ENCODE measurements at regions of chr1 and their contacts with region 1.

Region 1: GRCh38 chr1:27416387-27417111 is 24.1 kb downstream of the GPR3 start:
- DNase-seq: peak; percentile 70
- ATAC-seq: peak; percentile 73
- H3K4me3 ChIP-seq: no peak overlapping the region
- H3K27ac ChIP-seq: peak overlapping the region; percentile 74
- H3K4me1 ChIP-seq: peaks cover 36% of the 10 kb centered on the region
- H3K27me3 ChIP-seq: no peaks in the 10 kb centered on the region
- CTCF ChIP-seq: peak; percentile 74 to 82 (median 74)
- EP300 ChIP-seq: 0 out of 4 replicates have a peak, but pooled peaks of 1 of the 2 experiments have one; percentile 26
- POLR2A ChIP-seq: no peak
- RAD21 ChIP-seq: peak; percentile 87

Region 2: DNA sequence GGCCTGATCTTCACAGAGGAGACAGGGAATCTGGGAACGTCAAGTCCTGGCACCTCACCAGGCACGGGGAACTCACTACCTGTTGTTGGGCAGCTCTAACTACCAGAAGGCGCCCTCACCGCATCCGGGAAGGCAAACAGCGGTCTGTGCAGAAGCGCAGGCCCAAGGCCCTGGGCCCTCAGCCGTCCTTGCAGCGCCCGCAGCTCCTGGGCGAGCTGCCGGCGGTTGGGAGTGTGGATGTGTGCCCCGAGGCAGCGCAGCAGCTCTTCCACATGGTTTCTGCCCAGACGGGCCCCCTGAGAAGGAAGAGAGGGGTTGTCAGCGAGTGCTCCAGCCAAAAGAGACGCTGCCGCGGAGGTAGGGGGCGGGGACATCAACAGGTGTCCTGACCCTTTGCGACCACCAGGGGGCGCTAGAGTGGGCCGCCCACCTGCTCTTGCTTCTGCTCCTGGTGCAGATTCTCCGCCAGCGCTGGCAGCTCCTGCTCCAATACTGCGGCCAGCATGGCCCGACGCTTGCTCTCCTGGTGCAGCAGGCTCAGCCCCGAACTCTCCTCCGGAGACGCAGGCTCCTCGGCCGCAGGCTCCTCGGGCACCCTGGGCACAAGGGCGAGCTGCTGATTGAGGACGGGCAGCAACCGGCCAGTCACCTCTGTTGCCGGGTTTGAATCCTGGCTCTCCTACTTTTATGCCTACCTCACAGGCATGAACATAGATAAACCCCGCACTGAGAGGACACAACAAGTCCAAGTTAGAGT is 59.1 kb before region 1 on chr1:
- CTCF ChIA-PET with region 1: no interaction called
- POLR2A ChIA-PET with region 1: no interaction called
- RAD21 ChIA-PET with region 1: no interaction called
- SMC1A ChIA-PET with region 1: no interaction called
- in situ Hi-C with region 1: no loop called
- intact Hi-C with region 1: no loop called
- DNase-seq: no peak
- ATAC-seq: peak; percentile 88
- H3K4me3 ChIP-seq: peak overlapping the region; percentile 54; the same call in 1 of the 2 replicates
- H3K27ac ChIP-seq: no peak overlapping the region
- H3K4me1 ChIP-seq: peaks cover 13% of the 10 kb centered on the region
- H3K27me3 ChIP-seq: no peaks in the 10 kb centered on the region; a peak in 1 of 4 replicates
- CTCF ChIP-seq: peak; percentile 90 to 96 (median 93); a peak in 5 of 6 replicates
- EP300 ChIP-seq: no peak
- POLR2A ChIP-seq: no peak
- RAD21 ChIP-seq: peak; percentile 49

Region 3: DNA sequence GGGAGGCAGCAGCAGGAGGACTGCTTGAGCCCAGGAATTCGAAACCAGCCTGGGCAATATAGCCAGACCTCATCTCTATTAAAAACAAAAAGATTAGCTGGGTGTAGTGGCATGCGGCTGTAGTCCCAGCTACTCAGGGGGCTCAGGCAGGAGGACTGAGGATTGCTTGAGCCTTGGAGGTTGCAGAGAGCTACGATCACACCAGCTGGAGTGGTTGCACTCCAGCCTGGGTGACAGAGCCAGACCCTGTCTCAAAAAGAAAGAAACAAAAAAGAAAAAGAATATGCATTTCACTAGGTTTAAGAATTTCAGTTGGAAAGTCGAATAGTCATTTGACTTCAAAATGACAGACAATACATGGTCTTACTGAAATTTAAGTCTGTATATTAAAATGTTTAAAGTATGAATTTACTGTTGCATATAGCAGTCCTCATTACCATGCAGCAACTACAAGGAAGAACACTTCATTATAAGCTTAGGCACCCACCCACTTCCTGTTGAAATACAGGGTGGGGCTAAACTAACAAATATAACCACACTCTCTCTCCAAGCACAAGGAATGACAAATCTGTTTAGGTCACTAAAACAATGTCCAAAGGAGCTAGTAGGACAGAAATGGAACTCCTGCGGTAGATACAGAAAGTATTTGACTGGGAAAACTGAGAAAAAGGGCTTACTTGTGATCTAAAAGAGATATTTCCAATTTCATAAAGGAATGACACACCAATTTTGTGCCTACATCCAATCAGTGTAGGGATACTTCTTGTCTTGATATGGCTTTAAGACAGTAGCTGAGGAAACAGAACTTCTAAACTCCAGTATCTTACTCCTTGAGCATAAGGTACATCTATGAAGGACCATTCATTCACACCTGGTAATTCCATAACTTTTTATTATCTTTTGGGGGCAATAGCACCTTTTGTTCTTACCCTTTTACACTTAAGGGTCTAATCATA is 19.9 kb after region 1 on chr1:
- CTCF ChIA-PET with region 1: interaction called, 240 read pairs
- POLR2A ChIA-PET with region 1: interaction called, 78 read pairs
- RAD21 ChIA-PET with region 1: interaction called, 126 read pairs
- SMC1A ChIA-PET with region 1: interaction called, 470 read pairs
- in situ Hi-C with region 1: no loop called
- intact Hi-C with region 1: no loop called
- DNase-seq: no peak
- ATAC-seq: peak; percentile 75
- H3K4me3 ChIP-seq: peak overlapping the region; percentile 48
- H3K27ac ChIP-seq: peak overlapping the region; percentile 82
- H3K4me1 ChIP-seq: peaks cover 71% of the 10 kb centered on the region
- H3K27me3 ChIP-seq: no peaks in the 10 kb centered on the region
- CTCF ChIP-seq: no peak
- EP300 ChIP-seq: no peak
- POLR2A ChIP-seq: no peak
- RAD21 ChIP-seq: no peak

Region 4: DNA sequence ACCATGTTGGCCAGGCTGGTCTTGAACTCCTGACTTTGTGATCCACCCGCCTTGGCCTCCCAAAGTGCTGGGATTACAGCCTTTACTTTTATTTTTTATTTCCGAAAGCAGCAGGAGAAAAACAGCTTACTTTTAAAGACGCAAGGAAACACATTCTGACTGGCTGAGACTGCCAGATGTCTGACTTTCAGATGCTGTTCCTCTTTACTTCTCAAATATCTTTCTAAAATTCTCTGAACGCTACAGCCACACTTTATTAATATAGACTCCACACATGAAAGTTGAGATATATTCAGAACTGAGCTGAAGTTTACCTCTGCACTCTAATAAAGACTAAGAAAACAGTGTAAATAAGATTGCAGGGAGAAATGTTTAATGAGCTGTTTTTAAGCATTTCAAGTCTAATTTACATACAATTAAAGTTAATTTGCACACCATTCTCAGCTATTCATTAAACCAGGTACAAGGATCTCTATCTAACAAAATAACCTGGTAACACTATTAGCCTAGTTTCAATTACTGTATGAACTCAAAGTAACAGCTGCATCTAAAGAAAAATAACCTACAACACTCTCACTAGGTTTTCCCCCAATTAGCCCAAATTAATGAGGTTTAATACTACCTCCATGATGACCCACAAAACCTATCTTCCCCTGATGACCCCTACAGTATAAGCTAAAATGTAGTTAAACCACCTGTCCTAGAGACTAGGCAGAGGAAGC is 48.5 kb after region 1 on chr1:
- CTCF ChIA-PET with region 1: interaction called, 5 read pairs
- POLR2A ChIA-PET with region 1: interaction called, 8 read pairs
- RAD21 ChIA-PET with region 1: interaction called, 8 read pairs
- SMC1A ChIA-PET with region 1: interaction called, 13 read pairs
- in situ Hi-C with region 1: no loop called
- intact Hi-C with region 1: no loop called
- DNase-seq: no peak
- ATAC-seq: peak; percentile 66
- H3K4me3 ChIP-seq: no peak overlapping the region
- H3K27ac ChIP-seq: peak overlapping the region; percentile 41
- H3K4me1 ChIP-seq: peaks cover 15% of the 10 kb centered on the region
- H3K27me3 ChIP-seq: no peaks in the 10 kb centered on the region
- CTCF ChIP-seq: no peak
- EP300 ChIP-seq: no peak
- POLR2A ChIP-seq: no peak
- RAD21 ChIP-seq: no peak

Region 5: DNA sequence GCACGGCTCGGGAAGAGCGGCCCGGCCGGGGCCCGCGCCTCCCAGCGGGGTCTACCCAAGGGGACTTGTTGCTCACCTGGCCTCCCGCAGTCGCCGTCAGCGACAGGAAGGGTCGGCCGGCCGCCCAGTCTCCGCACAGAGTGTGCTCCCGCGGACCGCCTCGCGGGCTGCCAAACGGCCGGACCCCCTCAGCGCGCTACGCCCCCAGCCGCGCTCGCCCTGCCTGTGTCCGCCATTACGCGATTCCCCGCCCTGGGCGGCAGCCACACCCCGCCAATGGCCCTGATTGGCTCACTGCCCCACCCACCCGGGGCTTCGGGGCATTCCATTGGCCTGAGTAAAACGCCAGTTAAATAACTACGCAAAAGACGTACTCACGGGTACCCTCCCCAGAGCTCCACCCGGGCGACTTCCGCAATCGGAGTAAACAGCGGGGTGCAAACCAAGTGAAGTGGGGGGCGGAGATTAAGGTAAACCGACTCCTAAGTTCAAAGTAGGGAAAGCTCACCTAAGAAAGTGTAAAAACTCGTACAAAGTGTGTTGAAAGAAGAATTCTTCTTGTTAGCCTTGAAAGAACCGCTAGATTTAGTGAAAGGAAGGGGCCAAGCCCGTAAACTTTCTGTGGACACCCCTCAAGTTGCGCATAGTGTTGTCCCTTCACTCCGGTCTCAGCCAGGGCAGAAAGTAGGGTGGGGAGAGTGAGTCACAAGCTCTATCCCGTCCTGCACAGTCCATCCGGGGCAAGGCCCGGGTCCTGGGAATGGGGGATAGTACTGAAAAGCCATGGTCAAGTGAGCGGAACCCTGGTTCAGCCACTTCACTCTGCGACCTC is 73.6 kb after region 1 on chr1 and contains the start of gene WASF2:
- CTCF ChIA-PET with region 1: interaction called, 17 read pairs
- POLR2A ChIA-PET with region 1: interaction called, 38 read pairs
- RAD21 ChIA-PET with region 1: interaction called, 94 read pairs
- SMC1A ChIA-PET with region 1: interaction called, 30 read pairs
- in situ Hi-C with region 1: no loop called
- intact Hi-C with region 1: loop called (anchors 2 kb)
- DNase-seq: peak; percentile 89
- ATAC-seq: peak; percentile 92
- H3K4me3 ChIP-seq: peak within 1 kb of the TSS; percentile 98
- H3K27ac ChIP-seq: peak within 1 kb of the TSS; percentile 99
- H3K4me1 ChIP-seq: peaks cover 27% of the 10 kb centered on the region
- H3K27me3 ChIP-seq: no peaks in the 10 kb centered on the region
- CTCF ChIP-seq: no peak
- EP300 ChIP-seq: peak in 1 of 2 experiments; percentile 35; a peak in 1 of 4 replicates
- POLR2A ChIP-seq: peak; percentile 91
- RAD21 ChIP-seq: no peak
- polyA plus RNA-seq, gene WASF2: 7.0 to 9.3 TPM

Region 6: GRCh38 chr1:27525296-27526272 is 109.0 kb after region 1 on chr1:
- CTCF ChIA-PET with region 1: interaction called, 17 read pairs
- POLR2A ChIA-PET with region 1: interaction called, 3 read pairs
- RAD21 ChIA-PET with region 1: interaction called, 12 read pairs
- SMC1A ChIA-PET with region 1: interaction called, 12 read pairs
- in situ Hi-C with region 1: no loop called
- intact Hi-C with region 1: no loop called
- DNase-seq: peak; percentile 53
- ATAC-seq: peak; percentile 80
- H3K4me3 ChIP-seq: peak overlapping the region; percentile 68
- H3K27ac ChIP-seq: peak overlapping the region; percentile 87
- H3K4me1 ChIP-seq: peaks cover 34% of the 10 kb centered on the region
- H3K27me3 ChIP-seq: no peaks in the 10 kb centered on the region
- CTCF ChIP-seq: no peak
- EP300 ChIP-seq: peak in 1 of 2 experiments; percentile 29; a peak in 1 of 4 replicates
- POLR2A ChIP-seq: no peak
- RAD21 ChIP-seq: no peak; the same call in 1 of the 2 replicates

Region 7: DNA sequence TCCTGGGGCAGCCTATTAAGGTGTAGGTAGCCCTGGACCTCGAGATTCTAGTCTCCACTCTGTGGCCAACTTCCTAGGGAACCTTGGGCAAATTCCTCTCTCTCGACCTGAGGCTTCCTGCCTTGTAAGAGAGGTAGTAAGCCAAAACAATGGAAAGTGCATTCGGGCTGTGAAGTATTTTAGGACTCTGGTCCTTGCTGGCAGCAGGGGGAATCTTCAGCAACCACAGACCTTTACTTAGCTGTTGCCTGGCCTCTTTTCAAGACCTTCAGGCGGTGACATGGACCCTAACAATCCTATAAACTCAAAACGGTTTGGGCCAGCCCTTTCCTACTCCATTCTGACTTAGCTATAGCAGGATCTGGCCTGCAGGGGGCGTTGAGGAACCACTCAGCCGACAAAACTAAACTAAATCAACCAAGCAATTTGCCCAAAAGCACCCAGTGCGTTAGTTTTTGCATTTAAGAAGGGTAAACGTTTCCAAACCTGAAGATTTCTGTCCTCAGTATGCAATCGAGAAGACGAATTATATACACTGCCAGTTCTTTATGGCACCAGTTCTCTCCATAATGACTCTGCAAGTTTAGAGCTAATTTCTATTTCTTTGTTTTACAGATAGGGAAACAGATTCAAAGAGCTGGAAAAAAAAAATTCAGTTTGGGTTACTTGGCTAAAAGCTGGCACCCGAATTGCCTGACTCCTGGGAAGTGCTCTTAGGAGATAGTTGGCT is 831.9 kb after region 1 on chr1:
- CTCF ChIA-PET with region 1: no interaction called
- POLR2A ChIA-PET with region 1: no interaction called
- RAD21 ChIA-PET with region 1: no interaction called
- SMC1A ChIA-PET with region 1: no interaction called
- in situ Hi-C with region 1: no loop called
- intact Hi-C with region 1: no loop called
- DNase-seq: no peak
- ATAC-seq: peak; percentile 53
- H3K4me3 ChIP-seq: peak overlapping the region; percentile 3; the same call in 1 of the 2 replicates
- H3K27ac ChIP-seq: peak overlapping the region; percentile 87
- H3K4me1 ChIP-seq: peaks cover 39% of the 10 kb centered on the region
- H3K27me3 ChIP-seq: no peaks in the 10 kb centered on the region
- CTCF ChIP-seq: peak; percentile 86 to 98 (median 91)
- EP300 ChIP-seq: no peak
- POLR2A ChIP-seq: 0 out of 2 replicates have a peak, but pooled peaks have one; percentile 13
- RAD21 ChIP-seq: peak; percentile 87